ENCODE measurements at regions of chr2 and their contacts with region 1.

Region 1: GRCh38 chr2:124272261-124272841 is 247.3 kb downstream of the CNTNAP5 start:
- DNase-seq: no peak
- H3K4me3 ChIP-seq: no peak overlapping the region
- H3K27ac ChIP-seq: no peak overlapping the region
- H3K4me1 ChIP-seq: no peaks in the 10 kb centered on the region
- H3K27me3 ChIP-seq: no peaks in the 10 kb centered on the region
- CTCF ChIP-seq: no peak
- EP300 ChIP-seq: no peak
- POLR2A ChIP-seq: no peak

Region 2: DNA sequence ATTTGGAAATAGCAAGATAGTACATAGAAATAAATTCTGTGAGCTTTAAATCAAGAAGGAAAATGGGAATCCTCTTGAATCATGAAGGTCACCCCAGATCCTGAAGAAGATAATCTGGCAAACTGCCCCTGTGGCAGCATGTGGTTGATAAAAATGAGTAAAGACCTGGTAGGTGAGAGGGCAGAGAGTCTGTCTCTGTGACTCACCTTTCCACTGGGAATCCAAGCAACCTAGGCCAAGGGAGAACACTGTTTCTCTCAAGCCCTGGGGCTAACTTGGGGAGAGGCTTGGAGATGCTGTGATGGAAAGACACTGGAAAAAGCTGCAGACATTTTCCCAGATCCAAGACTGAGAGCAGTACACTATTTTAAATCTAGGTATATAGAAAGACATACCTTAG is 433.0 kb before region 1 on chr2:
- in situ Hi-C with region 1: no loop called
- intact Hi-C with region 1: loop called (anchors 5 kb)
- DNase-seq: no peak
- H3K4me3 ChIP-seq: no peak overlapping the region
- H3K27ac ChIP-seq: no peak overlapping the region
- H3K4me1 ChIP-seq: no peaks in the 10 kb centered on the region
- H3K27me3 ChIP-seq: no peaks in the 10 kb centered on the region
- CTCF ChIP-seq: no peak
- EP300 ChIP-seq: no peak
- POLR2A ChIP-seq: no peak

Region 3: DNA sequence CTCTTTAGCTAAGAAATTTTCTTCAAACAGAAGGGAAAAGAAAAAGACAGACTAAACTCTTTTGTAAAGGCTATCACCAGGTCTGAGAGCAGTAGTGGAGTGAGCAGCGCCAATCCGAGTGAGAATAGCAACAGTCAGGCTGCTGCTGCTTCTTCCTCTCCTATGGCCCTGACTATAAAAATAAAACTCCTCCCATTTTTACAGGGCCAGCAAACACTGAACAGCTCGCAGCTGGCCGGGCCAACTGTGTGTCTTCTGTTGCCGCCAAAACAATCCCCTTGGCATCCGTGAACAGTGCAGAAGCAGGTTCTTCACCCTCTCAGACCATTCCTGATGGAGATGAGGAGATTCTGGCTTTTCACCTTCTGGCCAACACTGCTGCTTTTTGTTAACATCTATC is 122.8 kb before region 1 on chr2:
- in situ Hi-C with region 1: no loop called
- intact Hi-C with region 1: no loop called
- DNase-seq: peak; percentile 7
- H3K4me3 ChIP-seq: no peak overlapping the region
- H3K27ac ChIP-seq: no peak overlapping the region
- H3K4me1 ChIP-seq: no peaks in the 10 kb centered on the region
- H3K27me3 ChIP-seq: no peaks in the 10 kb centered on the region
- CTCF ChIP-seq: no peak
- EP300 ChIP-seq: no peak
- POLR2A ChIP-seq: no peak

Region 4: GRCh38 chr2:124640221-124640750 is 367.9 kb after region 1 on chr2:
- in situ Hi-C with region 1: no loop called
- intact Hi-C with region 1: no loop called
- DNase-seq: no peak
- H3K4me3 ChIP-seq: no peak overlapping the region
- H3K27ac ChIP-seq: no peak overlapping the region
- H3K4me1 ChIP-seq: no peaks in the 10 kb centered on the region
- H3K27me3 ChIP-seq: no peaks in the 10 kb centered on the region
- CTCF ChIP-seq: no peak
- EP300 ChIP-seq: no peak
- POLR2A ChIP-seq: no peak